ENCODE measurements at regions of chr18 and their contacts with region 1.

Region 1: DNA sequence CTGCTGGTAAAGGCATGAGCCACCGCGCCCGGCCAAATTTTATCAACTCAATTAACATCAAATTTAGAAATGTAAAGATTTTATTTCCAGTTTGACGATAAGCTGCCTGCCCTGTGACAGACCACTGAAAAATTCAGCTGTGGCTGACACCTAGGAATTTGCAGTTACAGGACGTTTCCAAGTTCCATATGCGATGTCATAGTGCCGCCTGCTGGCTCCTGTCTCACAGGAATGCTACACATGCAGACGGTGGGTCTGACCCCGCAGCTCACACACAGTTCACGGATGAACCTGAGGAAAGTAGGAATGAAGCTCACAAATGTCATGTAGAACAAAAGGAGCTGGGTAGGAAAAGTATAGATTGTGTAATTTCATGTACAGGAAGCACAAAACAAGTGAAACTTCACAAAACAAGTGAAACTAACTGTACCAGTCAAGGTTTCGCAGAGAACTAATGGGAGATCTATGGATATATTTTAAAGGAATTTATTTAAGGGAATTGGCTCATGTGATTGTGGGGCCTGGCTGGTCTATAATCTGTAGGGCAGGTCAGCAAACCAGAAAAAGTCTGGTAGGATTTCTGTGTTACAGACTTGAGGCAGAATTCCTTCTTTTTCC is 13.2 kb upstream of the SEH1L start:
- DNase-seq: peak; percentile 83
- ATAC-seq: peak; percentile 97
- H3K4me3 ChIP-seq: no peak overlapping the region
- H3K27ac ChIP-seq: no peak overlapping the region
- H3K4me1 ChIP-seq: no peaks in the 10 kb centered on the region
- H3K27me3 ChIP-seq: no peaks in the 10 kb centered on the region
- CTCF ChIP-seq: peak; percentile 97
- POLR2A ChIP-seq: peak; percentile 58
- RAD21 ChIP-seq: peak; percentile 100

Region 2: DNA sequence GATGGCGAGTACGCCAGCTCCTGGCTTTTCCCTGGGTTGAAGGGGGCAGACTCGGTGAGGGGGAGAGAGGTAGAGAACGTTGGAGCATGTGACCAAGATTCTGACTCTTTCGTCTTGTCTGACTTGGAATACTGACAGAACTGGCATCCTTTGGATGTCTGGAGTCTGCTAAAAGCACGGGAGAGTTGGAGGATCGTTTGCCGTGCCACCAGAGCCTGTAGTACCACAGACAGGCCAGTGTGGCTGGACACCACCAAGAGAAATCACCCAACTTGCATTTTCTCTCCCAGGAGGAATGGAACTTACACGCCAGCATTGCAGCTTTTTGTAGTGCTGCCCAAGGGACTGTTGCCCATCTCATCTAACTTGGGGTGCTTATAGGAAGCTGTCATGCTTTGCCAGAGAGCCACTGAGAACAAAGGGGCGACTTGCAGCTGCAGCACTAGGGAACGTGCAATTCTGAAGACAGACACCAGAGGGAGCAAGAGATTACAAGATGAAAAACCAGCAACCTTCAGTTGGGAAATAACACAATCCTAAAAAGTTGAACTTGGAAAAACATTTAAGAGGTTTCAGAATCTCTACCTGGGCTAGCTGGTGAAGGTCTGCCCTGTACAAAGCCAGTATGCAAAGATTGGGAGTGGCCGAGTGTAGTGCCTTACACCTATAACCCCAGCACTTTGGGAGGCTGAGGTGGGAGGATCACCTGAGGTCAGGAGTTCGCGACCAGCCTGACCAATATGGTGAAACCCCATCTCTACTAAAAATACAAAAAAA is 207.6 kb before region 1 on chr18:
- CTCF ChIA-PET with region 1: interaction called, 38 read pairs
- POLR2A ChIA-PET with region 1: no interaction called
- dilution Hi-C with region 1: no loop called
- in situ Hi-C with region 1: loop called (anchors 5 kb)
- intact Hi-C with region 1: loop called (anchors 1 kb)
- DNase-seq: peak; percentile 74
- ATAC-seq: peak; percentile 80
- H3K4me3 ChIP-seq: no peak overlapping the region
- H3K27ac ChIP-seq: no peak overlapping the region
- H3K4me1 ChIP-seq: no peaks in the 10 kb centered on the region; the same call in 1 of the 2 replicates
- H3K27me3 ChIP-seq: no peaks in the 10 kb centered on the region
- CTCF ChIP-seq: peak; percentile 89
- POLR2A ChIP-seq: no peak
- RAD21 ChIP-seq: peak; percentile 92

Region 3: GRCh38 chr18:12744103-12744502 is 190.5 kb before region 1 on chr18:
- CTCF ChIA-PET with region 1: interaction called, 23 read pairs
- POLR2A ChIA-PET with region 1: no interaction called
- dilution Hi-C with region 1: no loop called
- in situ Hi-C with region 1: no loop called
- intact Hi-C with region 1: loop called (anchors 1 kb)
- DNase-seq: peak; percentile 84
- ATAC-seq: peak; percentile 76
- H3K4me3 ChIP-seq: no peak overlapping the region
- H3K27ac ChIP-seq: no peak overlapping the region
- H3K4me1 ChIP-seq: peaks cover 6% of the 10 kb centered on the region
- H3K27me3 ChIP-seq: no peaks in the 10 kb centered on the region
- CTCF ChIP-seq: peak; percentile 87
- POLR2A ChIP-seq: no peak
- RAD21 ChIP-seq: peak; percentile 88

Region 4: DNA sequence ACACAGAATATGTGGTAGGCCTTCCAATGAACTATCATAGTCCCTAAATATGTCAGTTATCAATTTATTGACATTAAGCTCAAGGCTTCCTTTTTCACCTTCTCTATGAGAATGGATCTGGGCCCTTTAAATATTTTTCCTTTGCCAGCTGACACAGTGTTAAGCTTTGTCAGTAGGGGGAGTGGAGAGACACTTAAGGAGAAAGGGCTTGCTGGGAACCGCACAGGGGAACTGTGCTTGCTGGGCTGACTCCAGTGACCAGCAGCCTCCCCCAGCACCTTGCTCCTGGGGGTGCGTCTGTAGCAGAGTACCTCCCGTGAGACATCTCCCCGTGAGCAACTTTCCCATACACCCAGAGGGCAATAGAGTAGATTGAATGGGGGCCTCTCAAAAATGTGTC is 44.1 kb before region 1 on chr18:
- CTCF ChIA-PET with region 1: interaction called, 3 read pairs
- POLR2A ChIA-PET with region 1: no interaction called
- dilution Hi-C with region 1: no loop called
- in situ Hi-C with region 1: no loop called
- intact Hi-C with region 1: loop called (anchors 2 kb)
- DNase-seq: no peak
- ATAC-seq: no peak
- H3K4me3 ChIP-seq: no peak overlapping the region
- H3K27ac ChIP-seq: no peak overlapping the region
- H3K4me1 ChIP-seq: no peaks in the 10 kb centered on the region
- H3K27me3 ChIP-seq: 0 out of 2 replicates have a peak, but pooled peaks cover 4% of the 10 kb centered on the region
- CTCF ChIP-seq: 0 out of 2 replicates have a peak, but pooled peaks have one; percentile 10
- POLR2A ChIP-seq: no peak
- RAD21 ChIP-seq: no peak

Region 5: DNA sequence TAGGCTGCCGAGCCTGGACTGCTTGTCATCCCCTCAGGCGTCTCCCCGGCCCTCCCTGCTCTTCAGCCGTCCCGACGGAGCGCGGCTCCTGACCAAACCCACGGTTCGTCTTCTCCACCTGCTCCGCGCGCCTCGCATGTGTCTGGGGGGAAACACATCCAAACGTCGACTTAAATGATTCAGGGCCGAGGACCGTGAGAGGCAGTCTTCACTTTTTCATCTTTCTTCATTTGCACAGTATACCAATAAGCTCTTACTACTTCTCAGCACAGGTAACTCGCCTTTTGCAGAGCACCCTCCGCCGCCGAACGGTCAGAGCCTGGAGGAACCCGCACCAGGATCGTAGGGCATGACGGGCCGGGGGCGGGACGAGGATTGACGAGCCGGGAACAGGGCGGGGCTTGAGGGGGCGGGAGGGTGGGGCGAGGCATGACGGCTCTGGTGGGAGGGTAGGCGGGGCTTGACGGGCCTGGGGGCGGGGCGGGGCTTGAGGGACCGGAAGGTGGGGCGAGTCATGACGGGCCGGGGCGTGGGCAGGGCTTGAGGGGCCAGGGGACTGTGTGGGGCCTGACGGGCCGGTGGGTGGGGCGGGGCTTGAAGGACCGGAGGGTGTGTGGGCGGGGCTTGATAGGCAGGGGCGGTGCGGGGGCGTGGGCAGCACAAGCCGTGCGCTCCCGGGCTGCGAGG is 12.9 kb after region 1 on chr18 and contains the start of gene SEH1L:
- CTCF ChIA-PET with region 1: interaction called, 16 read pairs
- POLR2A ChIA-PET with region 1: no interaction called
- dilution Hi-C with region 1: no loop called
- in situ Hi-C with region 1: no loop called
- intact Hi-C with region 1: no loop called
- DNase-seq: peak; percentile 98
- ATAC-seq: peak; percentile 93
- H3K4me3 ChIP-seq: peak within 1 kb of the TSS; percentile 88
- H3K27ac ChIP-seq: peak within 1 kb of the TSS; percentile 93
- H3K4me1 ChIP-seq: peaks cover 3% of the 10 kb centered on the region; the same call in 1 of the 2 replicates
- H3K27me3 ChIP-seq: no peaks in the 10 kb centered on the region
- CTCF ChIP-seq: no peak
- POLR2A ChIP-seq: peak; percentile 34; the same call in 1 of the 2 replicates
- RAD21 ChIP-seq: no peak
- total RNA-seq, gene SEH1L: 43.0 and 45.5 TPM in 2 replicates